ENCODE measurements at regions of chr17 and their contacts with region 1.

Region 1: GRCh38 chr17:81394921-81395599 is at the start of gene BAHCC1:
- DNase-seq: peak; percentile 99
- H3K4me3 ChIP-seq: peak within 1 kb of the TSS; percentile 67
- H3K27ac ChIP-seq: peak within 1 kb of the TSS; percentile 87
- H3K27me3 ChIP-seq: no peaks in the 10 kb centered on the region
- CTCF ChIP-seq: no peak
- polyA plus RNA-seq, gene BAHCC1: 1.3 and 2.5 TPM in 2 replicates

Region 2: DNA sequence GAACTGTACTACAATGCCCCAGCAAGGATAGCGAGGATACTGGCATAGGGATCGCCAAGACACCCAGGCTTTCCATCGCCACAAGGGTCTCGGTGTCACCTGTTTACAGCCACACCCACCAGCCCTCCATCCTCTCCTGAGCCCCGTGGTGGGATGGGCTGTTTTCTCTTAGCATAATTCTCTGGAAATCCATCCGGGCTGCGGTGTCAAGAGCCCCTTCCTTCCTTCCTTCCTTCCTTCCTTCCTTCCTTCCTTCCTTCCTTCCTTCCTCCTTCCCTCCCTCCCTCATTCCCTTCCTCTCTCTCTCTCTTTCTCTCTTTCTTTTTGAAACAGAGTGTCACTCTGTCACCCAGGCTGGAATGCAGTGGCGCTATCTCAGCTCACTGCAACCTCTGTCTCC is 35.8 kb before region 1 on chr17:
- CTCF ChIA-PET with region 1: no interaction called
- POLR2A ChIA-PET with region 1: interaction called, 25 read pairs
- DNase-seq: no peak
- H3K4me3 ChIP-seq: no peak overlapping the region
- H3K27ac ChIP-seq: no peak overlapping the region
- H3K27me3 ChIP-seq: peaks cover 11% of the 10 kb centered on the region
- CTCF ChIP-seq: no peak

Region 3: DNA sequence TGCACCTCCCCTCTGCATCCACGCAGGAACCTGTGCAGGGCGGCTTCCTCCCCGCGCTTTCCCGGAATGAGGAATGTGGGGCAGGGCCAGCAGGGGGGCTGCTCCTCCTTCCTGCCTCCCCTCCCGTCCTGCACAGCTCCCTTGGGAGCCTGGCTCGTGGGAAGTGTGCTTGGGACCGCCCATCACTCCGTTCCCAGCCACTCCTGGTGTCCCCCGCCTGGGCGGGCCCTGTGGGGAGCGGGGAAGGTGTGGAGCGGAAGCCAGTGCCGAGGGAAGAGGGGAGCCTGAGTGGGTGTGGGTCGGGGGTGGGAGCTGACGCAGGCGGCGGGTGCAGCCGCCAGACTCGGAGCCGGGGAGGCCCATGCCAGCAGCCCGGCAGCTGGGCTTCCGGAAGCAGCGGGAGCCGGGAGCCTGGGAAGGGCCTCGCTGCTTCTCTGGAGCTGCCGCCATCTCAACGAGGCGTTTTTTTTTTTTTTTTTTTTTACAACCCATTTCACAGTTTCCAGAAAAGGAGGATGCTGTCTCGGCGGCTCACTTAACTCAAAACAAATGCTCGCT is 24.3 kb after region 1 on chr17:
- CTCF ChIA-PET with region 1: no interaction called
- POLR2A ChIA-PET with region 1: interaction called, 11 read pairs
- DNase-seq: peak; percentile 44
- H3K4me3 ChIP-seq: peak overlapping the region; percentile 22; the same call in 1 of the 2 replicates
- H3K27ac ChIP-seq: peak overlapping the region; percentile 88
- H3K27me3 ChIP-seq: no peaks in the 10 kb centered on the region
- CTCF ChIP-seq: no peak

Region 4: DNA sequence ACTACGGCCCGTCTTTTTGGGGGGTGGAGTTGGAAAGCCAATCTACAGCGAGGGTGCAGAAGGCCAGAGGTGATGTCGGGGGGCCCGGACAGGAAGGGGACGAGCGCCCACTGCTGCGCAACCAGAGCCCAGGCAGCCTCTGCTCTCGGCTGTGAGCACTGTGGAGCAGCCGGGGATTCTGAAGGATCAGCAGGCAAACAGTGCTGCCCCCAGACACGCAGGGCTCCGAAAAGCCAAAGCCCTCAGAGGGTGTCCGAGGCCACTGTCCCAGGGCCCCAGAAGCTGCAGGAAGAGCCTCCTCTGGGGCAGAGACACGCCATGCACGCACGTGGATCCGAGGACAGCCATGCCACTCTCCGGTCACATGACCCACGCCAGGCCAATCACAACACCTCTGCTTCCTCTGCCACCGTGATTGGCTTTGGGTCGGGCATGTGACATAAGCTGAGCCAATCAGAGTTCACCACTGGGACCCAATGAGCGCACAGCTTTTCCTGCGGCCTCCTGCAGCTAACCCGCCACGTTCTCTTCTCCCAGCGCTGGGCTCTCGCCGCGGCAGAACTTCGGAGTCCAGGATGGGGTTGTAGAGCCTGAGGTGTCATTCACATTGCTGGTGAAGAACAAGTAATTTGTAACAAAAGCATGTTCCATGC is 76.9 kb after region 1 on chr17:
- CTCF ChIA-PET with region 1: no interaction called
- POLR2A ChIA-PET with region 1: no interaction called
- DNase-seq: no peak
- H3K4me3 ChIP-seq: no peak overlapping the region
- H3K27ac ChIP-seq: no peak overlapping the region
- H3K27me3 ChIP-seq: no peaks in the 10 kb centered on the region
- CTCF ChIP-seq: no peak

Region 5: DNA sequence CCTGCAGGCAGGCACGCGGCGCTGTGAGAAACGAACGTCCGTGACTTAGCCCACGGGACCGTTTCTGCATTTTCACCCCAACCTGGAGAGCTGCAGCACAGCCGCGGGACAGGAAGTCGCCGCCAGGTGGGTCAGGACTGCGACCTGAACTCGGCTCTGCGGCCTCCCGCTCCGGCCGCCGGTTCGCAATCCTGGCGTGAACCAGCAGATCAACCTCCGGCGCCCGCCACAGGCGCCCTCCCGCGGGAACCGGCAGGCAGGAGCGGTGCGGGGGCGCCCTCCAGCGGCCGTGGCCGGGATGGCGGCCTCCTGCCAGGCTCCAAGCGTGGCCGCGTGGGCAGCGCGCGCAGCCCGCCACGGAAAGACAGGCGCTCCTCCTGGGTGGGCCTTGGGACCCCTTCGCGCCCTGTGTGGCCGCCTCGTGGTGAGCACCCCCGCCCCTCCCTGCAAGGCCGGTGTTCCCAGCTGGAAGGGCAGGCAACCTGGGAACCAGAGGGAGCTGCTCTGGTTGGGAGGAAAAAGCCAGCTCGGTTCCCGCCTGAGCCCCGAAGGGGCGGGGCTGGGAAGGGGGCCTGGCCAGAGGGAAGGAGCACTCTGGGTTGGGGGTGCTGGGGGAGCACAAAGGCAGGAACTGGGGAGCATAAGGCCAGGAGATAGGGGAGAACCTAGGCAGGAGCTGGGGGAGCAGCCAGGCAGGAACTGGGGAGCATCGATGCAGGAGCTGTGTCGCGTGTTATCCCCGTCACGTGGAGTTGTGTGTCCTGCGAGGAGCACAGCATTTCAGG is 89.3 kb after region 1 on chr17:
- CTCF ChIA-PET with region 1: interaction called, 9 read pairs
- POLR2A ChIA-PET with region 1: interaction called, 11 read pairs
- DNase-seq: no peak
- H3K4me3 ChIP-seq: peak overlapping the region; percentile 56
- H3K27ac ChIP-seq: no peak overlapping the region
- H3K27me3 ChIP-seq: peaks cover 6% of the 10 kb centered on the region
- CTCF ChIP-seq: peak; percentile 69

Region 6: GRCh38 chr17:81512560-81513371 is 117.7 kb after region 1 on chr17 and contains the start of gene ACTG1:
- CTCF ChIA-PET with region 1: no interaction called
- POLR2A ChIA-PET with region 1: interaction called, 27 read pairs
- DNase-seq: peak; percentile 72
- H3K4me3 ChIP-seq: peak within 1 kb of the TSS; percentile 96
- H3K27ac ChIP-seq: peak within 1 kb of the TSS; percentile 98
- H3K27me3 ChIP-seq: no peaks in the 10 kb centered on the region
- CTCF ChIP-seq: no peak
- polyA plus RNA-seq, gene ACTG1: 2,721 and 3,607 TPM in 2 replicates

Measured in AG04450 (cell line).